Left lung (tissue), 14 donors: ENCODE measurements at regions of chr5 and their contacts with region 1.

Region 1: GRCh38 chr5:45042283-45042682 is 233.5 kb downstream of the MRPS30 start:
- DNase-seq: no peak
- ATAC-seq: no peak
- H3K4me3 ChIP-seq: no peak overlapping the region
- H3K27ac ChIP-seq: no peak overlapping the region
- H3K4me1 ChIP-seq: no peaks in the 10 kb centered on the region
- H3K27me3 ChIP-seq: no peaks in the 10 kb centered on the region
- CTCF ChIP-seq: no peak

Region 2: GRCh38 chr5:44389090-44389822 is 653.0 kb before region 1 on chr5 and contains the start of gene FGF10:
- intact Hi-C with region 1: no loop called
- DNase-seq: peak; percentile 34 to 75 (median 70)
- ATAC-seq: peak; percentile 80
- H3K4me3 ChIP-seq: peak within 1 kb of the TSS; percentile 25 to 32
- H3K27ac ChIP-seq: peak within 1 kb of the TSS; percentile 25 to 37
- H3K4me1 ChIP-seq: peaks cover 0 to 9% of the 10 kb centered on the region in 2 donors
- H3K27me3 ChIP-seq: peaks cover 18 to 53% of the 10 kb centered on the region in 2 donors
- CTCF ChIP-seq: no peak
- polyA plus RNA-seq, gene FGF10: 41.3 to 47.7 (median 44.2) TPM

Region 3: GRCh38 chr5:44862808-44863207 is 179.5 kb before region 1 on chr5:
- intact Hi-C with region 1: no loop called
- DNase-seq: peak in 1 of 4 donors; percentile 13
- ATAC-seq: no peak
- H3K4me3 ChIP-seq: no peak overlapping the region
- H3K27ac ChIP-seq: no peak overlapping the region
- H3K4me1 ChIP-seq: no peaks in the 10 kb centered on the region
- H3K27me3 ChIP-seq: no peaks in the 10 kb centered on the region
- CTCF ChIP-seq: no peak

Region 4: DNA sequence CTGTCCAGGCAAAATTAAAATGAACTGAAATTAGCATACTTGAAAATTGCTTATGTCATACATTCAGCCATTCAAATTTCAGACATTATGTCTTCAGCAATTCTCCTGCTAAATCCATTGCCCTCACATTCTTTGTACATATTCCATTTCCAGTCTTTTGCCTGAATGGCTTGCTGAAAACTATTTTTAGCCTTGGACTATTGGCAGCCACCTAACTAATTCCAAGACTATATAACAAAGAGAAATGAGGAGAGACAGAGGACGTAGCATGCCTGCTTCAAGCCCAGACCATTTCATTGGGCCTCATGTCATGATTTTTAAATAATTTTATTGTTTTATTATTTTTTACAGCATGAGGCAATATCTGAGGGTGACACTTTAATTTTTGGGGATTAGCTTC is 133.3 kb before region 1 on chr5:
- intact Hi-C with region 1: no loop called
- DNase-seq: no peak
- ATAC-seq: no peak
- H3K4me3 ChIP-seq: no peak overlapping the region
- H3K27ac ChIP-seq: no peak overlapping the region
- H3K4me1 ChIP-seq: no peaks in the 10 kb centered on the region
- H3K27me3 ChIP-seq: no peaks in the 10 kb centered on the region
- CTCF ChIP-seq: no peak

Region 5: GRCh38 chr5:45017568-45017967 is 24.7 kb before region 1 on chr5:
- intact Hi-C with region 1: no loop called
- DNase-seq: no peak
- ATAC-seq: no peak
- H3K4me3 ChIP-seq: no peak overlapping the region
- H3K27ac ChIP-seq: no peak overlapping the region
- H3K4me1 ChIP-seq: no peaks in the 10 kb centered on the region
- H3K27me3 ChIP-seq: no peaks in the 10 kb centered on the region
- CTCF ChIP-seq: no peak

Region 6: DNA sequence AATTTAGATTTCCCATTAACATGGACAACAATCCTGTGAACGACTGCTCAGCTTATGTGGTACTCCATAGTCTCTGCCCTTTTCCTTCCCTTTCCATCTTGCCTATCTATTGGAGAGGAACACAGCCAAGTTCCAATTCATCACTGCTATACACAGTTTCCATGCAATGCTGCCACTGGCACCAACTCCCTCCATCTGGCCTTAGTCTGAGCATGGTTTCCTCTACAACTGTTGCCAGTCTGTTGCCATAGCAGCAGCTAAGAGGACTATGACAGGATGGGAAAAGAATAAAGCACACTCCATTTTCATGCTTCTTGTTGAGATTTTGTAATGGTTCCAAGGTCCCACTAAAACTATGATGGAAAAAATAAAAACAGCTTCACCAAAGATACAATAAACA is 464.9 kb after region 1 on chr5:
- intact Hi-C with region 1: loop called in 1 of 2 experiments (anchors 10 kb)
- DNase-seq: no peak
- ATAC-seq: no peak
- H3K4me3 ChIP-seq: no peak overlapping the region
- H3K27ac ChIP-seq: no peak overlapping the region
- H3K4me1 ChIP-seq: no peaks in the 10 kb centered on the region
- H3K27me3 ChIP-seq: no peaks in the 10 kb centered on the region
- CTCF ChIP-seq: no peak